Activated naive CD4-positive, alpha-beta T cell treated with anti-CD3 and anti-CD28 coated beads for 36 hours (primary cell): ENCODE measurements at regions of chr3 and their contacts with region 1.

Region 1: GRCh38 chr3:66472313-66473134 is 28.3 kb downstream of the LRIG1 start:
- DNase-seq: peak; percentile 77
- H3K4me3 Mint-ChIP-seq: peak overlapping the region; percentile 42
- H3K27ac Mint-ChIP-seq: peak overlapping the region; percentile 94
- H3K4me1 Mint-ChIP-seq: peaks cover 64% of the 10 kb centered on the region
- H3K27me3 Mint-ChIP-seq: no peaks in the 10 kb centered on the region

Region 2: DNA sequence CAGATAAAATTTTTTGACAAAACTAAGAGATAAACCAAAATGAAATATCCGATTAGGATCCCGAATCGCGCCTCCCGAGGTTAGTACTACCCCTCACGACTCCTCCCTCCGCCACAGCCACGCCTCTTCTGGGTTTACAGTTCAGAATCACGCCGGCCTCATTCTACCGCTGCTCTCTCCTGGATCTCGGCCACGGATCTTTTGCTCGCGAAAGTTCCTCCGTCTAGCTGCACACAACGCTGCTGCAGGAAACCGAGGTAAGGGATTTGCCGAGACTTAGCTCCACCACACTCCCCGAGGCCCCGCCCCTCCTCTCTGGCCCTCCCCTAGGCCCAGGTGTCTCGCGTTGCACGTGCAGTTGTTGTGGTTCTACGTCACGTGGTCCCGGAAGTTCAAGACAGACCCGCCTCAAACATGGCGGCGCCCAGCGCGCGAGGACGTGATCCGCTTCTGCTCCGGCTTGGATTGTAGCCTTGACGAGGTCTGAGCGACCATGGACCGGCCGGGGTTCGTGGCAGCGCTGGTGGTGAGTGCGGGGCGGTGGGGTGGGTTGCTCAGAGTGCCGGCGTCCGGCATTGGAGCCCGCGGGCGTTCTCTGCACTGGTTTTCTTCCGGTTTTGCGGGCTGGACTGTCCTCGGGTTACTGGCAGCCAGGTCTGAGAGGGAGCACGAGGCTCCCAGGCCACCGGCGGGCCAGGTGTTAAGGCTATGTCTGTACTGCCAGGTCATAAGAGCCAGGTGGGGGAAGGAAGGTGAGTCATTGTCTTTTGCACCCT is 251.7 kb before region 1 on chr3 and contains the start of gene SLC25A26:
- CTCF ChIA-PET with region 1: no interaction called
- intact Hi-C with region 1: loop called (anchors 1 kb)
- DNase-seq: peak; percentile 99
- H3K4me3 Mint-ChIP-seq: peak within 1 kb of the TSS; percentile 91
- H3K27ac Mint-ChIP-seq: peak within 1 kb of the TSS; percentile 95
- H3K4me1 Mint-ChIP-seq: peaks cover 51% of the 10 kb centered on the region
- H3K27me3 Mint-ChIP-seq: no peaks in the 10 kb centered on the region
- total RNA-seq, gene SLC25A26: 25.3 to 26.3 TPM

Region 3: GRCh38 chr3:66239513-66240123 is 232.9 kb before region 1 on chr3:
- CTCF ChIA-PET with region 1: no interaction called
- intact Hi-C with region 1: loop called (anchors 1 kb)
- DNase-seq: peak; percentile 64
- H3K4me3 Mint-ChIP-seq: peak overlapping the region; percentile 5
- H3K27ac Mint-ChIP-seq: peak overlapping the region; percentile 86
- H3K4me1 Mint-ChIP-seq: peaks cover 30% of the 10 kb centered on the region
- H3K27me3 Mint-ChIP-seq: no peaks in the 10 kb centered on the region

Region 4: DNA sequence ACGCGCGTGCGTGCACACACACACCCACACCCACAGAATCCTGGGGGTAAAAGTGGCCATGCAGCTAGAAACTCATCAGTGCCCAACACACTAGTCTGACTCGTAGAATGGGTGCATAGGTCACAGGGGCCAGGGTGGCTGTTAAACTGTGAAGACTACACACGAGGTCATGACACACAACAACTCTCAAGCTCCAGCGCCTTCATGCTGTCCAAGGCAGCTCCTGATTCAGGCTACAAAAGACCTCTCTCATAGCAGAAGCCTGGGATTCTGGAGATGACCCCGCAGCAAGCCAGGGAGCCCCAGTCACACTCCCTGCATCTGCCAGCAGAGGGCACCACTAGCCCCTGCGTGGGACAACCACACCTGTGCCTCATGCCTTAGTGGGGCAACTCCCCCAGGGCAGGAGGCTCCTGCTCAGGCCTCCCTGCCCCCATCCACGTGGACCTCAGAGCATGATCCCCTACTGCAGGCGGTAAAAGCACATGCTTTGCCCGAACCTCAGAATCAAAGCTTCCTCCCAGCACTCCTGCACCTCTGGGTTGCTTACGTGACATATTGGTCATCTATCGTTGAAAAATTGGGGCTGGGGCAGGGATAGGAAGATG is 64.8 kb before region 1 on chr3:
- CTCF ChIA-PET with region 1: interaction called, 11 read pairs
- intact Hi-C with region 1: no loop called
- DNase-seq: peak; percentile 81
- H3K4me3 Mint-ChIP-seq: no peak overlapping the region
- H3K27ac Mint-ChIP-seq: no peak overlapping the region
- H3K4me1 Mint-ChIP-seq: peaks cover 3% of the 10 kb centered on the region
- H3K27me3 Mint-ChIP-seq: no peaks in the 10 kb centered on the region

Region 5: GRCh38 chr3:66428733-66429132 is 43.8 kb before region 1 on chr3:
- CTCF ChIA-PET with region 1: no interaction called
- intact Hi-C with region 1: no loop called
- DNase-seq: no peak
- H3K4me3 Mint-ChIP-seq: no peak overlapping the region
- H3K27ac Mint-ChIP-seq: no peak overlapping the region
- H3K4me1 Mint-ChIP-seq: peaks cover 16% of the 10 kb centered on the region
- H3K27me3 Mint-ChIP-seq: peaks cover 2% of the 10 kb centered on the region

Region 6: DNA sequence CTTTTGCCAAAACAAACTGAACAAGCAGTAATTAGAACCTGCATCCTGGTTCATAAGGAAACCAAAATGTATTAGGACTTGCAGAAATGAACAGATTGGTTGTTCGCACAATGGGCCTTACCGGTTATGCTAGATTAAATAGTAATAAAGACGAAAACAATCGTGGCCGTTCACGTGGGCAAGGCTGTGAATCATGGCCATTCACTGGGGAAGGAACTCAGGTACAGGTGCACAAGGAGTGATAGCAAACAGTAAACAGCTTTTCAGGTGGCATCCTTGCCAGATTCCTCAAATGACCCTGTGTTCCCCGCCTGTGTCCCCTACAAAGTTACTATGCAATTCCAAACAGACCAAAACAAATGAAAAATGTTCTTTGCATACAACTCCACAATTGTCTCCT is 20.1 kb after region 1 on chr3:
- CTCF ChIA-PET with region 1: interaction called, 12 read pairs
- intact Hi-C with region 1: loop called (anchors 1 kb)
- DNase-seq: no peak
- H3K4me3 Mint-ChIP-seq: no peak overlapping the region
- H3K27ac Mint-ChIP-seq: no peak overlapping the region
- H3K4me1 Mint-ChIP-seq: peaks cover 81% of the 10 kb centered on the region
- H3K27me3 Mint-ChIP-seq: peaks cover 2% of the 10 kb centered on the region

Region 7: GRCh38 chr3:67083277-67083676 is 610.8 kb after region 1 on chr3:
- CTCF ChIA-PET with region 1: no interaction called
- intact Hi-C with region 1: loop called (anchors 2 kb)
- DNase-seq: peak; percentile 79
- H3K4me3 Mint-ChIP-seq: peak overlapping the region; percentile 61
- H3K27ac Mint-ChIP-seq: peak overlapping the region; percentile 94
- H3K4me1 Mint-ChIP-seq: peaks cover 31% of the 10 kb centered on the region
- H3K27me3 Mint-ChIP-seq: no peaks in the 10 kb centered on the region